ENCODE measurements at regions of chr19 and their contacts with region 1.

Region 1: DNA sequence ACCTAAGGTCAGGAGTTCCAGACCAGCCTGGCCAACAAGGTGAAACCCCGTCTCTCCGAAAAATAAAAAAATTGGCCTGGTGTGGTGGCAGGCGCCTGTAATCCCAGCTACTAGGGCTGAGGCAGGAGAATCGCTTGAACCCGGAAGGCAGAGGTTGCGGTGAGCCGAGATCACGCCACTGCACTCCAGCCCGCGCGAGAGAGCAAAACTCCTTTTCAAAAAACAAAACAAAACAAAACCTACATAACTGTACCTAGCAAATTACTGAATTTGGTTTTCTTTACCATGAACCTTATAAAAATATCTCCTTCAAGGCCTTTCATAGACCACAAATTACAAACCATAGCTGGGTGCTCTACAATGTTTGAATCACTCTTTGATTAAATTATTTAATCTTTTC is 760 bp downstream of the ZNF91 start:
- DNase-seq: peak; percentile 47 to 62
- ATAC-seq: peak; percentile 59

Region 2: DNA sequence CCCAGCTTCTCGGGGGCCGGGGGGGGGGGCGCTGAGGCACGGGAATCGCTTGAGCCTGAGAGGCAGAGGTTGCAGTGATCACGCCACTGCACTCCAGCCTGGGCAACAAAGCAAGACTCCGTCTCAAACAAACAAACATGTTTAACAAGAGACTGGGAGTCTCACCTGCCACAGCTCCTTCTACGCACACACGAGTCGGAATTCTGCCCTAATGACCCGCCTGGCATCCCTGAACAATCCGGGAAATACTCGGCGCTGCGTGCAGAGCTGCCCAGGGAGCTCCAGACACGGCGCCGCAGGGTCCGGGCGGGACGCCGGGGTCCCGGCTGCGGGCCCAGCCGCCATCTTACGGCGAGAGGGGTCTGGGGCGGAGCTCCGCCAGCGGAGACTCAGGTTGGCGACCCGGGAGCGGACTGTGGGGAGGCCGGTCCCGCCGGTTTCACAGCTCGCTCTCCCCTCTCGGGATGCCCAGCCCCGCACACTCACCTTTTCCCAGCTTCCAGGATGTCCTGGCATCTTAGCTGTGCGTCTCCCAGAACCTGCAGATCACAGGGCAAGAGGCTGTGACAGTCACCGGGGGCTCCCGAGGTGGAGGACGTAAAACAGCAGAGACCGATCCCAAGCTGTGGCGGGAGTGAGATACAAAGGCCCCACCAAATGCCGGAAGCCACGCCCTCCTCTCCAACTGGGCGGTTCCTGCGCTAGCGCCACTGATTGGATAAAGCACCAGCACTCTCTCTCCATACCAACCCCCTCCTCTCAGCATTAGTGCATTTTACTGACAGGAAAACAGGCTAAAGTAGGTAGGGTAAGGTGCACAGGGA is 120.7 kb before region 1 on chr19:
- intact Hi-C with region 1: loop called in 1 of 2 experiments (anchors 5 kb)
- DNase-seq: peak; percentile 95 to 97
- ATAC-seq: peak; percentile 97

Region 3: DNA sequence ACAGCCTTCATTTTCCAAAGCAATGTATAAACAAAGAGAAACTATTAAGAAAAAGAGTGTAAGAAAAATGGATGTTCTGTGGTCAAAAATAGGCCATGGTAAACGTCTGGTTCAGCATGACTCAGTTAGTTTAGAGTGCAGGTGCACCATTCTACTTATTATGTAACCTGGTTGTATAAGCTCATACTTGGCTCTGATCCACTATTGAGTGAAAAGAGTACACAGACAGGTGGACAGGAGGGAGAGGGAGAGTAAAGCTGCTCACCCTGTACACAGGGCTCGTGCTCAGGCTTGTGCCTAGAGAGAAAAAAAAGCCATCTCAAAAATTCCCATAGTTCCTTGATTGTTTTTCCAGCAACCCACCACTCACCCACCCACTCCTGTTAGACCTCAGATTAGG is 86.5 kb after region 1 on chr19:
- intact Hi-C with region 1: no loop called
- DNase-seq: peak in 1 of 2 donors; percentile 26
- ATAC-seq: peak; percentile 99

Measured in left colon (tissue), 2 donors.